ENCODE measurements at regions of chr20 and their contacts with region 1.

Region 1: DNA sequence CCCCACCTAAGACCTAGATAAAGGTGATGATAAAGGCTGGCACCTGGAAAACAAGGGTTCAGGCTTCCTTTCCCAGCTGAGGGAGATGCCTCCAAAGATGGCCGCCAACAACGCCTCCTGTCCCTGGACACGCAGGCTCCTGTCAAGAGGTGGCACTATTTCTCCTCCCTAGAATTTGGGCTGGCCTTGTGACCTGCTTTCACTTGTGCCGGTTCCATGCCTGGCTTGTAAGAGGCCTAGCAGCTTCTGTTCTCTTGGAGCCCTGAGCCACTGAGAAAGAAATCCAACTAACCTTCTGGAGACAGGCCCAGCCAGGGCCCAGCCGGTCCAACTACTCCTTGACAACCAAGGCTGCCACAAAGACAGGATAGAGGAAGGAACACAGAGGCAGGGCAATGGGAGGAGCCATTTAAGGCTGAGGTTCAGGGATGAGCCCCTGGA is 60.2 kb upstream of the RALY start:
- DNase-seq: peak; percentile 35
- H3K4me3 ChIP-seq: no peak overlapping the region
- H3K27ac ChIP-seq: no peak overlapping the region
- H3K4me1 ChIP-seq: no peaks in the 10 kb centered on the region
- H3K27me3 ChIP-seq: no peaks in the 10 kb centered on the region
- CTCF ChIP-seq: peak; percentile 82 to 97 (median 84)

Region 2: DNA sequence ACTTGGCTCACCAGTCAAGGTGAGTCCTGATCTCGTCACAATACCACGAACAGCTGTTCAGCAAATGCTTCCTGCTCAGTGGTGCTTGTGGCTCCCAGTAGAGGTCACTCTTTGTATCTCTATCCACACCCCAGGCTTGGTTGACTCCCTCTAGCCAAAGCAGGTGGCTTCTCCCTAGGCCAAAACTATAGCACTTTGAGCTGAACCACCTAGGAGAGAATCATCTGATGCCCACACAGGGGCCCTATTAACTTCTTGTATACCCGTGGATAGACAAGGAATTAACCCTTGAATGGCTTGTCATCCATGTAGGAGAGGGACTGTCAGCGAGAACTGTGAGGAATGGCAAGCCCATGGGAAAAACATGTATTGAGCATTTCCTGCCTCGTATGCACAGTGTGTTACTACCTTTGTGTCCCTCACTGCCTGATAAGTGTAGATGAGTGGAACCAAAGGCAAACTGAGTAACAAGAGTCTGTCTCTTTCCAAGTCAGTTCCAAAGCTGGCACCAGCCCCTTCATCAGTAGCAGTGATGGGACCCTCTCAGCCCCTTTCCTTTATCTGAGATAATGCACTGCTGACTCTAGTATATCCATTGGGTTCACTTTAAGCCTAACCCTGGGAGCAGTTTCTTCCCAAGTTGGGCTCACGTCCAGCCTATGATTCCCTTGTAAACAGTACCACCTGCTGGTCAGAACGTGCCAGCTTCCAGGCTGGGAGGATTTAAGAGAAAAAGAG is 136.0 kb after region 1 on chr20:
- dilution Hi-C with region 1: loop called (anchors 25 kb)
- DNase-seq: no peak
- H3K4me3 ChIP-seq: no peak overlapping the region
- H3K27ac ChIP-seq: no peak overlapping the region
- H3K4me1 ChIP-seq: peaks cover 51% of the 10 kb centered on the region
- H3K27me3 ChIP-seq: no peaks in the 10 kb centered on the region
- CTCF ChIP-seq: peak; percentile 66 to 92 (median 89)

Region 3: DNA sequence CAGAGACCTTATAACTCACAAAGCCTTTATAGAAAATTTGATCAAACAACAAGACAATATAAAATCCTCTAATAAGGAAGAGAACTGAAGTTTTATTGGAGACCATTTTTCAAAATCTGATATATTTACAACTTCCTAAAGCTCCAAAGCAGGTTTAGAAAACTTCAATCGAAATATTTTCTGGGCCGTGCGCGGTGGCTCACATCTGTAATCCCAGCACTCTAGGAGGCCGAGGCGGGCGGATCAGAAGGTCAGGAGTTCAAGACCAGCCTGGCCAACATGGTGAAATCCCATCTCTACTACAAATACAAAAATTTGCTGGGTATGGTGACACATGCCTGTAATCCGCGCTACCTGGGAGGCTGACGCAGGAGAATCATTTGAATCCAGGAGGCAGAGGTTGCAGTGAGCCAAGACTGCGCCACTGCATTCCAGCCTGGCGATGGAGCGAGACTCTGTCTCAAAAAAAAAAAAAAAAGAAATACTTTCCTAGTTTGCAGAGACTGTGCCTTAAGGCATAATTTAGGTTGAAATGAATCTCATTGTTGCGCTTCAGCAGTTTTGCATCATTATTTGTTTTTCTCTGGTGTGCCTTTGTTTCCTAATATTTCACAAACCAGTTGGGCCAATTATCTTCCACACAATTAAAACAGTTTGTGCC is 247.1 kb after region 1 on chr20:
- dilution Hi-C with region 1: no loop called
- DNase-seq: no peak
- H3K4me3 ChIP-seq: no peak overlapping the region
- H3K27ac ChIP-seq: no peak overlapping the region
- H3K4me1 ChIP-seq: no peaks in the 10 kb centered on the region
- H3K27me3 ChIP-seq: peaks cover 6% of the 10 kb centered on the region
- CTCF ChIP-seq: no peak